ENCODE measurements at regions of chr9 and their contacts with region 1.

Region 1: DNA sequence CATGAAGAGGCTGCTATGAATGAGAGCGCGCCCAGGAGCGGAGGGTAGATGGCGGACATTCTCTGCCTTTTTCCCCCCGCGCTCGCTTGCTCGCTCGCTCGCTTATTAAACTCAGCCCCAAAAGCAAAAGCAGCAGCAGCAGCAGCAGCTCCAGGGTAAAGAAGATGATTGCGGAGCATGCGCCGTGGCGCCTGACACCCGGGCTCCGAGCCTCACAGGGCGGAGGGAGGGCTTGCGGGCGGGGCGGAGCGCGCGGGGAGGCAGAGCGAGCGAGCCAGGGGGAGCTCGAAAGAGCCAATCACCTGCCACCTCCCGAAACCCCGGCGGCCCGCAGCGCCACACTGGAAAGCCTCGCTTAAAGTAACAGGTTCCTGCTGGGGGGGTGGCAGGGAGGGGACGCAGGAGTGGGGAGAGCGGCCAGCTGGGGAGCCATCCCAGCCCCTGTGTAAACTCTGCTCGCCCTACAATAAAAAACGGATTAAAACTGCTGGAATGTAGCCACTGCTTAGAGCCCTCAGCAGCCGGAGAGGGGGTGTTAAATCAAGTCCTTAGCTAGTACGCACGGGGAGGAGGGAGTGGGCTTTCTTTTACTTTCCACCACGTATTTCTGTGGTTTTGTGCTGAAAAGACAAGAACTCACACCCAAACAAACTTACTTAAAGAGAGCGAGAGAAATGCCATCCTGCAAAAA is at the start of gene MLLT3:
- DNase-seq: peak; percentile 97
- ATAC-seq: peak; percentile 84
- H3K4me3 Mint-ChIP-seq: peak within 1 kb of the TSS; percentile 95
- H3K27ac Mint-ChIP-seq: peak within 1 kb of the TSS; percentile 97
- H3K4me1 Mint-ChIP-seq: peaks cover 30% of the 10 kb centered on the region
- H3K27me3 Mint-ChIP-seq: no peaks in the 10 kb centered on the region
- total RNA-seq, gene MLLT3: 112 TPM

Region 2: GRCh38 chr9:20209391-20210340 is 412.8 kb before region 1 on chr9:
- POLR2A ChIA-PET with region 1: interaction called, 27 read pairs
- DNase-seq: peak; percentile 70
- ATAC-seq: peak; percentile 88
- H3K4me3 Mint-ChIP-seq: peak overlapping the region; percentile 18
- H3K27ac Mint-ChIP-seq: peak overlapping the region; percentile 95
- H3K4me1 Mint-ChIP-seq: peaks cover 50% of the 10 kb centered on the region
- H3K27me3 Mint-ChIP-seq: no peaks in the 10 kb centered on the region

Region 3: DNA sequence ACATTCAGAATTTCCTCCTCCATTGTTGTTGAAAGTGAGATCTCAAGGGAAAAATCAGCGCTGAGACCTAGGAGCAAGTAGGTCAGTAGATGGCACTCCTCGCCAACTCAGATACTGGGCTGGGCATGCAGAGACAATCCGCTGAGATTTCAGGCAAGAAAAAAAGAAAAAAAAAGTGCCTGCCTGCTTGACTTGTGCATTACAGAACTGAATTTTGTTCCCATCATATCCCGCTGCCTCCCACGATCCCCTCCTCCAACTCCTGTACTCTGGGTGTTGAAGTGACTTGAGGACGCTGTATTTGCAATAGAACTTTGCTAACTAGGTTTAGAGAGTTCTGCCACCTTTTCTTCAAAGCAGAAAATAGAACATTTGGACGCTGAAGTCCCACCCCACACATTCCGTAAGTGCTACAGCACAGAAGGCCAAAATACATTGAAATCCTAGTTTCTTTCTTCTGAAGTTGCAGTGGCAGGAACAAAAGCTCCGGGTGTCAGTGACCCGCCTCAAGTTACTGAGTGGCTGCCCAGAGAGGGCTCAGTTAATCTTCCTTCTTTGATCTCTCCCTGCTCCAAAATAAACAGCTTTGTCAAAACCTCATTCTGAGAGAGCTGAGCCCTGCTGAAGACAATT is 266.0 kb before region 1 on chr9:
- POLR2A ChIA-PET with region 1: interaction called, 15 read pairs
- DNase-seq: peak; percentile 48
- ATAC-seq: peak; percentile 64
- H3K4me3 Mint-ChIP-seq: peak overlapping the region; percentile 51
- H3K27ac Mint-ChIP-seq: peak overlapping the region; percentile 66
- H3K4me1 Mint-ChIP-seq: peaks cover 69% of the 10 kb centered on the region
- H3K27me3 Mint-ChIP-seq: no peaks in the 10 kb centered on the region

Region 4: DNA sequence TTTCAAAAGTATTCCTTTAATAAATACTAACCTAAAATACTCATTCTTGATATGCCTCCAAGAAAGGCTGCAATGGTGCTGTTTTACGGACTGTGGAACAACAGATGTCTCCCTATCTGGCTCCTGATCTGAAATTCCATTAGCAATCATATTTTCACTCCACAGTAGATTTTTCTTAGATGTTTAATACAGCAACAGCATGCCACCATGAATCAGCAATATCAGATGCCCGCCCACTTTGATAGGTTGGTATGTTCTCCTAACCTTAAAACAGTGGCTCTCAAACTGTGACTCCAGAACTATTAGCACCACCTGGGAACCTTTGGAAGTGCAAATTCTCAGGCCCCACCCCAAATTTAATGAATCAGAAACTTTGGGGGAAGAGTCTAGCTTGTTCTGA is 110.4 kb before region 1 on chr9:
- POLR2A ChIA-PET with region 1: interaction called, 22 read pairs
- DNase-seq: no peak
- ATAC-seq: no peak
- H3K4me3 Mint-ChIP-seq: no peak overlapping the region
- H3K27ac Mint-ChIP-seq: peak overlapping the region; percentile 82
- H3K4me1 Mint-ChIP-seq: peaks cover 83% of the 10 kb centered on the region
- H3K27me3 Mint-ChIP-seq: no peaks in the 10 kb centered on the region

Region 5: DNA sequence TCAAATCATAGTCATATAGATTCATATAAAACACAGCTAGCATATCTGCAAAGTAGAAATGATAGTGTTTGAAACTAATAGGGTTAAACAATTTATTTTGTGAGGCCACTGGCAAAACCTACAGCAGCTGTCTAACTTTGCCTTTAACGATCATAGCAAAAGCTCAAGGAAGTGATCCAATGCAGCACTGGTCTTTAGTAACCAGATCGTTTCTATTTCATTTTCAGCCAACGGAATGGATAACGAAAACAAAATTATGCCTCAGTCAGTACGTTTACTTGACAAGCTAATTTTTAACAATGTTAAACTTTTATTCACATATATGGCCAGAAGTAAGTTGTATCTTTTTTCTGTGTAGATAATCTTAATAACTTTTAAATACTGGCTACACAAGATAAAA is 17.9 kb before region 1 on chr9:
- POLR2A ChIA-PET with region 1: interaction called, 18 read pairs
- DNase-seq: no peak
- ATAC-seq: peak; percentile 72
- H3K4me3 Mint-ChIP-seq: peak overlapping the region; percentile 62
- H3K27ac Mint-ChIP-seq: peak overlapping the region; percentile 67
- H3K4me1 Mint-ChIP-seq: peaks cover 54% of the 10 kb centered on the region
- H3K27me3 Mint-ChIP-seq: no peaks in the 10 kb centered on the region

Region 6: GRCh38 chr9:20684035-20684872 is 61.8 kb after region 1 on chr9 and contains the start of gene FOCAD:
- POLR2A ChIA-PET with region 1: interaction called, 39 read pairs
- DNase-seq: peak; percentile 98
- ATAC-seq: peak; percentile 98
- H3K4me3 Mint-ChIP-seq: peak within 1 kb of the TSS; percentile 94
- H3K27ac Mint-ChIP-seq: peak within 1 kb of the TSS; percentile 89
- H3K4me1 Mint-ChIP-seq: peaks cover 16% of the 10 kb centered on the region
- H3K27me3 Mint-ChIP-seq: no peaks in the 10 kb centered on the region
- total RNA-seq, gene FOCAD: 21.2 to 28.3 TPM